ENCODE measurements at regions of chr18 and their contacts with region 1.

Region 1: DNA sequence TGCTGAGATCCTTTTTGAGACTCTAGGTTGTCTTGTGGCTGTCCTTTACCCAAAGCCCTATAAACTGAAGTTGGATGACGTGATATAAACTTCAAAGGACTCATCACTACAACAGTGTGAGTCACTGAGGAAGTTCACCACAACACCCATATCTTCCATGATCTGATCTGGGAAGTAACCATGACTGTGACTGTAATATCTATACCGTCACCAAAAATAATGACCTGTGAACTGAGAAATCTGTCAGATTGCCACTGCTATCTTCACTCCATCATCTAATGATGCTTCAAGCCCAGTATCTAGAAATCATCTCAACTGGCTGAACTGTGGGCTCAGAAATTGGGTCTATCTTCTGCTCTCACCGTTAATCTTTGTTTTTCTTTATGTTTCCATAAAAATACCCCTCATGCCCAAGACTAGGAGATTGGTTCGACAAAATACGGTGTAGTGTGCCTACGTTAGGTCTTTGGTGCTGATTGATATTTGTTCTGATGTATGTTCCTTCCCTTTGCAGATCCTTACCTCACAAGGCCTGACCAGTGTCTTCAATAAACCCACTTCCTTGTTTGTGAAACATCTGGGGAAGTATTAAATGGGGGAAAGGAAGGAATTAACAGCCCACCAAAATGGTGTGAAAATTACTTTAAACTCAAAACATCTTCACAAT is 78.2 kb downstream of the MYL12B start:
- DNase-seq: no peak
- H3K4me3 ChIP-seq: no peak overlapping the region
- H3K27ac ChIP-seq: no peak overlapping the region
- H3K4me1 ChIP-seq: no peaks in the 10 kb centered on the region
- H3K27me3 ChIP-seq: no peaks in the 10 kb centered on the region
- CTCF ChIP-seq: no peak

Region 2: DNA sequence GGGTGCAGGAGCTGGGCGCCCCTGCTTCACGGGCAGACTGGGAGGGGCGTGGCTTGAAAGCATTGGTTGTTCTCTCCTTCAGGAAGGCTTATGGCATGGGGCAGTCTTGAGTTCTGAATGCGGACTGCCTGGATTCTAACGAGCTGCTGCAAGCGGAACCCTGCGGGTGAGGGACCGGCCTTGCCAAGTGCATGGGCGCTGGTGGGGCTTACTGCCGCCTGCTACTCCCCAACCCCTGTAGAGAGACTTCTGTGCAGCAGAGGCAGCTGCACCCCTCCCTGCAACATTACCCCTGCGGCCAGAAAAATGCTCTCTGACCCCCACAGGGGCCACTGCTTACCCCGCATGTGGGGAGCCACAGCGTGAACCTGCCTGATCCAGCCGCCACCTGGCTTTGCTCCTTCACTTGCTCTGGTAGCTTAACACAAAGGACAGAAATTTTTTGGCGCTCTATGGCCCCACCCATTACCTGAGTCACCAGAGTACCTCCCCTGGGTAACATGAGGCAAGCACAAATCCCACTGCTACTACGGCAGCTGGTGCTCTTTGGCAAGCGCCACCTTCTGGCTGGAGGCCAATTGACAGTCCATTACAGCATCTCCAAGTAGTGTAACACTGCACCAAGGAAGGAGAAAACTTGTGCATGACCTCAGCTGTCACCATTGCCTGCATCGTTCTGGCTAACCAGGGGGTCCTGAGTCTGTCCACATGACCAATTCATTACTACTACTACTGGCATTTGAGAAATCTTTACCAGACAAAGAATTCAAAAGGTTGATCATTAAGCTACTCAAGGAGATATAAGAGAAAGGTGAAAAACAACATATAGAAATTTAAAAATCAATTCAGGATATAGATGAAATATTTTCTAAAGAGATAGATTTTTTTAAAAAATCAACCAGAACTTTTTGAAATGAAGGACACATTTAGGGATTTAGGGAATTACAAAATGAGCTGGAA is 42.8 kb before region 1 on chr18:
- CTCF ChIA-PET with region 1: interaction called, 13 read pairs
- POLR2A ChIA-PET with region 1: no interaction called
- intact Hi-C with region 1: no loop called
- DNase-seq: peak; percentile 94 to 95
- H3K4me3 ChIP-seq: peak overlapping the region; percentile 77
- H3K27ac ChIP-seq: peak overlapping the region; percentile 68
- H3K4me1 ChIP-seq: 0 out of 2 replicates have a peak, but pooled peaks cover 8% of the 10 kb centered on the region
- H3K27me3 ChIP-seq: no peaks in the 10 kb centered on the region
- CTCF ChIP-seq: peak; percentile 72

Region 3: GRCh38 chr18:3321133-3321812 is 18.9 kb before region 1 on chr18:
- CTCF ChIA-PET with region 1: no interaction called
- POLR2A ChIA-PET with region 1: interaction called, 20 read pairs
- intact Hi-C with region 1: no loop called
- DNase-seq: peak; percentile 88 to 93
- H3K4me3 ChIP-seq: no peak overlapping the region
- H3K27ac ChIP-seq: peak overlapping the region; percentile 74
- H3K4me1 ChIP-seq: peaks cover 32% of the 10 kb centered on the region
- H3K27me3 ChIP-seq: no peaks in the 10 kb centered on the region
- CTCF ChIP-seq: no peak

Measured in PC-9 (cell line).